Mammary epithelial cell (primary cell): ENCODE measurements at regions of chrX and their contacts with region 1.

Region 1: DNA sequence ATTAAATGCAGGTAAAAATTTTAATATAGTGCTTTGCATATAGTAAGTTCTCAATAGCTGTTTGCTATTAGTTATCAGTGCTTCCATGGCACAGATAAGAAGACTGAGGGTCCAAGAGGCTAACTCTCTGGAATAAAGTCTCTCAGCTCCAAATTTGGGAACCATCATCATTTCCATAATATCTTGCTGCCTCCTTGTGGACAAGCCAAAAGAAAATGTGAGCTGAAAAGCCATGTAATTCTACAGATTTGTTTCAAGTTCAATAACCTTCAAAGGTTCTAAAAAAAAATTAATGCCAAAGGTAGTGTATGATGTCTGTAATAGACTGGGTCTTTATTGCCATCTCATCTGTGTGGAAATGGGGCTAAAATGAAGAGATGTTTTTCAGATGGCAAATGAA is 136.9 kb upstream of the VCX start:
- DNase-seq: no peak
- H3K4me3 ChIP-seq: no peak overlapping the region
- H3K27ac ChIP-seq: no peak overlapping the region
- H3K4me1 ChIP-seq: peaks cover 2% of the 10 kb centered on the region
- H3K27me3 ChIP-seq: no peaks in the 10 kb centered on the region
- CTCF ChIP-seq: peak; percentile 17 to 56

Region 2: DNA sequence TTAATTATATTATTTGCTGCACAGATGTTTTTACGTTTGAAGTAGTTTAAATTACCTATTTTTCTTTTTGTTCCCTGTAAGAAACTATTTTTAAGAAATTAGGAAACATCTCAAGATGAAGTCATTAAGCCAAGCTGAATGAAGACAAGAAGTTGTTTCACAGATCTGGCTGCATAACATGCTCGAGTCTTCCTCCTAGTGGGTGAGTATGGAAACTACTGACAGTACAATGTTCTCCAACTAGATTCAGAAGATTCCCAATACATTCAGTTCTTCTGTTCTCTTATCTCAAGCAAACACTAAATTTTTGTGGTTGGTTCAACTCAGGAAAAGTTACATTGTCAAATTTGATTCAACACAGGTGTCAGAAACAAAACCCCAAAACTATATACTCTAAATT is 119.9 kb before region 1 on chrX:
- CTCF ChIA-PET with region 1: no interaction called
- dilution Hi-C with region 1: no loop called
- in situ Hi-C with region 1: no loop called
- intact Hi-C with region 1: loop called (anchors 10 kb)
- DNase-seq: peak; percentile 16
- H3K4me3 ChIP-seq: no peak overlapping the region
- H3K27ac ChIP-seq: no peak overlapping the region
- H3K4me1 ChIP-seq: no peaks in the 10 kb centered on the region
- H3K27me3 ChIP-seq: peaks cover 2% of the 10 kb centered on the region
- CTCF ChIP-seq: peak; percentile 57 to 71

Region 3: DNA sequence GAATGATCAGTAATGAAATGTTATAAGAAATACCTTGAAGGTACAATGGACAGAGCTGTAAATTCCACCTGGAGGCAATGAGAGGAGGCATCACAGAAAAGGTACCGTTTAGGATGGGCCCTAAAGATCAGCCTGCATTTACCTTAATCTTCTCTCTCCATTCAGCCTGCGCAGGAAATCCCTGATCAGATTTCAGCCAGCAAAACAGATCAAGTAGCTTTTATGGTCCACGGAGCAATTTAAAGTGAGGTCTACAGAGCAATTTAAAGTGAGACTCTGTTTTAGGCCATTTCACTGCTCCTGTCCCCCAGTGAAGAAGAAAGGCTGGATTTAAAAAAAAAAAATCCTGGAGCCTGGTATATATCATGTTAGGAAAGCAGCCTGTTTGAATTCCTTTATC is 58.2 kb before region 1 on chrX:
- CTCF ChIA-PET with region 1: no interaction called
- dilution Hi-C with region 1: no loop called
- in situ Hi-C with region 1: no loop called
- intact Hi-C with region 1: no loop called
- DNase-seq: no peak
- H3K4me3 ChIP-seq: no peak overlapping the region
- H3K27ac ChIP-seq: no peak overlapping the region
- H3K4me1 ChIP-seq: no peaks in the 10 kb centered on the region
- H3K27me3 ChIP-seq: no peaks in the 10 kb centered on the region
- CTCF ChIP-seq: no peak

Region 4: DNA sequence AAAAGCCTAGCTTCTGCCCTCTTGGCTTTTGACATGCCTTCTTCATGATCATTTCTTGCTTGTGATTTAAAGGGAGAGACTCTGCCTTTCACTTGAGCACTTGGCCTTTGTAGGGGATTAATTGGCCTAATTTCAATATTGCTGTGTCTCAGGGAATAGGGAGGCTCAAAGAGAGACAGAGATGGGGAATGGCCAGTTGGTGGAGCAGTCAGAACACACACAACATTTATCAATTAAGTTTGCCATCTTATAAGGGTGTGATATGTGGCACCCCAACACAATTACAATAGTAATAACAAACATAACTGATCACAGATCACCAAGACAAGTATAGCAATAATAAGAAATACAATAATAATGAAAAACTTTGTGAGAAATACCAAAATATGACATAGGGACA is 14.5 kb after region 1 on chrX:
- CTCF ChIA-PET with region 1: no interaction called
- dilution Hi-C with region 1: no loop called
- in situ Hi-C with region 1: no loop called
- intact Hi-C with region 1: no loop called
- DNase-seq: no peak
- H3K4me3 ChIP-seq: no peak overlapping the region
- H3K27ac ChIP-seq: no peak overlapping the region
- H3K4me1 ChIP-seq: no peaks in the 10 kb centered on the region
- H3K27me3 ChIP-seq: no peaks in the 10 kb centered on the region
- CTCF ChIP-seq: no peak